ENCODE measurements at regions of chr7 and their contacts with region 1.

Region 1: GRCh38 chr7:91356915-91357314 is 92.7 kb downstream of the FZD1 start:
- DNase-seq: no peak
- H3K4me3 ChIP-seq: no peak overlapping the region
- H3K27ac ChIP-seq: no peak overlapping the region
- H3K4me1 ChIP-seq: no peaks in the 10 kb centered on the region
- H3K27me3 ChIP-seq: no peaks in the 10 kb centered on the region
- CTCF ChIP-seq: no peak

Region 2: GRCh38 chr7:91302794-91303193 is 54.1 kb before region 1 on chr7:
- CTCF ChIA-PET with region 1: no interaction called
- POLR2A ChIA-PET with region 1: interaction called, 12 read pairs
- intact Hi-C with region 1: no loop called
- DNase-seq: no peak
- H3K4me3 ChIP-seq: no peak overlapping the region
- H3K27ac ChIP-seq: no peak overlapping the region
- H3K4me1 ChIP-seq: no peaks in the 10 kb centered on the region
- H3K27me3 ChIP-seq: no peaks in the 10 kb centered on the region
- CTCF ChIP-seq: no peak

Measured in PC-9 (cell line).